ENCODE measurements at regions of chr5 and their contacts with region 1.

Region 1: GRCh38 chr5:16552666-16553343 is 64.0 kb downstream of the RETREG1 start:
- DNase-seq: peak; percentile 54
- ATAC-seq: peak; percentile 98
- H3K4me3 ChIP-seq: no peak overlapping the region
- H3K27ac ChIP-seq: no peak overlapping the region
- H3K4me1 ChIP-seq: peaks cover 9% of the 10 kb centered on the region; the same call in 1 of the 2 replicates
- H3K27me3 ChIP-seq: no peaks in the 10 kb centered on the region
- CTCF ChIP-seq: peak; percentile 68
- EP300 ChIP-seq: no peak
- POLR2A ChIP-seq: no peak
- RAD21 ChIP-seq: peak; percentile 31; the same call in 1 of the 2 replicates

Region 2: DNA sequence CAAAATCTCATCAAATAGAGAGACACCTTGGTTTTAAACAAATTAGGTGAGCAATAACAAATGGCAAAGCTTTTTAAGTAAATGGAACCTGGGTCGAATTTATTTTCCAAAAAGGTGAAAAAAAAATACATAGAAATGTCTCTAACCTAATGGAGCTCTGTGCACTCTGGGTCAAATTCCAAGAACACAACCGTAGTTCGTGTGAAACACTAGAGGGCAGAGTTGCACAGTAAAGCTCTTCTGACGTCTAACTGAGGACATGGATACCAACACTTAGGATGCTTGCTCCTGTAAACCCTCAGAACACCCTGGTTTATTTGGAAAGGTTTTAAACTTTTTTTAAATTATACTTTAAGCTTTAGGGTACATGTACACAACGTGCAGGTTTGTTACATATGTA is 392.1 kb before region 1 on chr5:
- CTCF ChIA-PET with region 1: interaction called, 3 read pairs
- POLR2A ChIA-PET with region 1: no interaction called
- in situ Hi-C with region 1: no loop called
- intact Hi-C with region 1: loop called (anchors 1 kb)
- DNase-seq: peak; percentile 60
- ATAC-seq: peak; percentile 97
- H3K4me3 ChIP-seq: no peak overlapping the region
- H3K27ac ChIP-seq: no peak overlapping the region
- H3K4me1 ChIP-seq: no peaks in the 10 kb centered on the region
- H3K27me3 ChIP-seq: no peaks in the 10 kb centered on the region
- CTCF ChIP-seq: peak; percentile 79
- EP300 ChIP-seq: no peak
- POLR2A ChIP-seq: no peak
- RAD21 ChIP-seq: 0 out of 2 replicates have a peak, but pooled peaks have one; percentile 31

Region 3: DNA sequence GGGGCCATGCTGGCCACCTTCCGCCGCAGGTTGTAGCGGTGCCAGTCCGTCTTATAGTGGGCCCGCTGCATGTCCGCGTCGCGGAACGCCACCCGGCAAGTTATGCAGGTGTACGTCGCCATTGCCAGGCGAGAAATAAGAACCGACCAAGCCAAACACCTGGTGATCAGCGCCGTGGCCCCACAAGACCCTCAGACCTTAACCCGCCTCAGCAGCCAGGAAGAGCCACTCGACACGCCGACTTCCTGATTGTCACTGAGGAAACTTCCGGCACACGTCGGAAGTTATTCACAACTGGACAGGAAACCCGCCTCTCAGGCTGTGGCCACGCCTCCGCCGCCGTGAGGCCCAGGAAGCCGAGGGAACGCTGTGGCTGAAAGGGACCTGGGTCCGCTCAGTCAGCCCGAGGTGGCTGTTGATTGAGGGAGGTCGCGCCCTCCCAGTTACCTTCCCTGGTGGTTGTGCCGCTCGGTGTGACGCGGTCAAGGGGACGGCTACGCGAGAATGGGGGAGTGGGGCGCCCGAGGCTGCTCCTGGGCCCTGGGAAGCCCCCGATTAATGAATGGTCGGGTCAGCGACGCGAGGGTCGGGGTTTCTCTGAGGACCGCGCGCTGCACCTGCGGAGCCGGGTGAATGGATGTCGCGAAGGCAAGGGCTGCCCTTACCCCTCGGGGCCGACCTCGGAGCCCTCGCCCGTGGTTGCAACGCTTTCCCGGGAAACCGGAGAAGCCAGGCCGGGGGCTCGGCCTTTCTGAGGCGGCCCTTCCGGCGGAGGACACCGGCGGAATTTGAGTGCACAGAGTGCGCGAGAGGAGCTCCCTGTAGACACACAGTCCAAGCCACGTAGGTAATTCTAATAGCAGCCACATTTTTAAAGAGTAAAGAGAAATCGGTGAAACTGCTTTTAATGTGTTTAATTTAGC is 87.0 kb before region 1 on chr5 and contains the start of gene ZNF622:
- CTCF ChIA-PET with region 1: no interaction called
- POLR2A ChIA-PET with region 1: no interaction called
- in situ Hi-C with region 1: no loop called
- intact Hi-C with region 1: loop called (anchors 1 kb)
- DNase-seq: peak; percentile 91
- ATAC-seq: peak; percentile 97
- H3K4me3 ChIP-seq: peak within 1 kb of the TSS; percentile 76 to 99 (median 97)
- H3K27ac ChIP-seq: peak within 1 kb of the TSS; percentile 89
- H3K4me1 ChIP-seq: peaks cover 56% of the 10 kb centered on the region
- H3K27me3 ChIP-seq: no peaks in the 10 kb centered on the region; a peak in 1 of 5 replicates
- CTCF ChIP-seq: no peak
- EP300 ChIP-seq: peak in 1 of 2 experiments; percentile 15; a peak in 2 of 4 replicates
- POLR2A ChIP-seq: peak; percentile 98 to 99
- RAD21 ChIP-seq: no peak; the same call in 1 of the 2 replicates
- total RNA-seq, gene ZNF622: 44.7 and 50.2 TPM in 2 replicates

Region 4: DNA sequence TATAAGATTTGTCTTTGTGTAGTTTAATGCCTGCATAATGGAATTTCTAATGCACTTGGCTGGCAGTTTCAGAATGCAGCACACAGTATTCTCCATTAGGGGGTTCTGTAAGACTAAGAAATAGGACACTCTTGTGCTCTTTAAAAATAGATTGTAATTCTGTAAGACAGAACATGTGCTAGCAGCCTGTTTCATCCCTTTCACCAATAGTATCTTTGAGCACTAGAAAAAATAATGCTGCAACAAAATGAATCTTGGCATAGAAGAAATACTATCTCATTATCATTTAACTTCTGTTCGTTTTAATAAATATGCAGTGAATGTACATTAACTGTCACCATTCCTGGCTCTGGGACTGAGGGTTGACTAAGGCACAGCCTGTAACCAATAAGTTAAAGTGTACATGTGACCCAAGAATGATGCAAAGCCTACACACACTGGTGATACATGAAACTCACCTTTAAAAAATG is 63.4 kb before region 1 on chr5:
- CTCF ChIA-PET with region 1: interaction called, 11 read pairs
- POLR2A ChIA-PET with region 1: no interaction called
- in situ Hi-C with region 1: loop called (anchors 5 kb)
- intact Hi-C with region 1: loop called (anchors 1 kb)
- DNase-seq: peak; percentile 30
- ATAC-seq: peak; percentile 86
- H3K4me3 ChIP-seq: no peak overlapping the region
- H3K27ac ChIP-seq: no peak overlapping the region
- H3K4me1 ChIP-seq: no peaks in the 10 kb centered on the region
- H3K27me3 ChIP-seq: no peaks in the 10 kb centered on the region; a peak in 1 of 5 replicates
- CTCF ChIP-seq: peak; percentile 60
- EP300 ChIP-seq: no peak
- POLR2A ChIP-seq: no peak
- RAD21 ChIP-seq: peak; percentile 38

Measured in HepG2 (cell line).